RWPE1 (cell line): ENCODE measurements at regions of chr2 and their contacts with region 1.

Region 1: GRCh38 chr2:174465327-174465726 is 21.5 kb downstream of the GPR155 start:
- DNase-seq: no peak
- H3K27ac ChIP-seq: no peak overlapping the region
- CTCF ChIP-seq: no peak

Region 2: DNA sequence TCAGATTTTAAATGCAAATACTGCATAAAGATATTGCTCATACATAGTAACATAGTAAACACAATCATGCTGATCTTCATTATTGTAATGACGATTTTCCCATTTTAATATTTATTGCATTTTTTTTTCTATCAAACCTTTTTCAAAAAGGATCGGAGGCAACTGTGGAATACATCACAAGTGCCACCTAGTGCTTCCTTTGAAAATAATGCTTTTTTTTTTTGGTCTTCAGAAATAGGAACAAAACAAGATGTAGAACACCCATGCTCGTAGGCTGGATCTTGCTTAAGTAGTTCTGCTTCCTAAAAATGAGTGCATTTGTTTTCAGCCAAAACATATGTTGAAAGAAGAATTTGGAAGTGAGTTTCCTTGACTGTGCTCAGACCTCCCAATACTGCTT is 57.2 kb after region 1 on chr2:
- CTCF ChIA-PET with region 1: interaction called, 15 read pairs
- POLR2A ChIA-PET with region 1: no interaction called
- DNase-seq: no peak
- H3K27ac ChIP-seq: no peak overlapping the region
- CTCF ChIP-seq: peak; percentile 37

Region 3: DNA sequence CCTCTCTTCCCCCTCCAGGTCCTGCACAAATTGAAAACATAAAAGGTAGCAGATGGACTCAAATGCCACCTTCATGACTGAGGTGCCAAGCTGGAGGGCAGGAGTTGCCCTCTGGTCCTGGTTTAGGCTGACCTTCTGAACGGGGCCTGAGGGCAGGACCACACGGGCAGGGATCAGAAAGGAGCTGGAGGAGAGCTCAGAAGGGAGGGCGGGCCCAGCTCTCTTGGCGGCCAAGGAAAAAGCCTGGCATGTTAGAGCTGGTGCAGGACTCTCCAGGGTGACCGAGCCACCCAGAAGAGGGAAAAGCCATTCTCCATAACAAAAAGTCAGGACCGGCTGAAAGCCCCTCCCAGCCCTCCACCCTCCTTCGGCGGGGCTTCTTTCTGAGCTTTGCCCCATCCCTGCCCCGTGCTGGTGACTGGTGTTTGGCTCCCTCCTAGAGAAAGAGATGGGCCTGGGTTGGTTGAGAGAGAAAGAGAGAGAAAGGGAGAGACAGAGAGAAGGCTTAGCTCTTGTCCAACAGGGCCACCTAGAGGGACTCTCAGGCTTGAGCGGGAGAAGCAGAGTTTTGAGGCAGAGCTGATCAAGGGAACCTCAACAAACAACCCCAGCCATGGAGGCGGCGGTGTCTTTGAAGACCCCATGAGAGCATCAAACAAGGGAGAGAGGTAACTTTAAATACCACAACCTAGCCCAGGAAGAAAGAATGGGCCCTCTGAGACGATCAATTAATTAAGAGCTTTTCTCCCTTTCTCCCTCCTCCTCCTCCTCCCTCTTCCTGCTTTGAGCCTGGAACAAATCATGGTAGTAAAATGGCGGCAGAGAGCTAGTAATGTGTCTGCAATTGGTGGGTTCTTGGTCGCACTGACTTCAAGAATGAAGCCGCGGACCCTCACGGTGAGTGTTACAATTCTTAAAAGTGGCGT is 81.5 kb after region 1 on chr2:
- CTCF ChIA-PET with region 1: interaction called, 17 read pairs
- POLR2A ChIA-PET with region 1: no interaction called
- DNase-seq: no peak
- H3K27ac ChIP-seq: no peak overlapping the region
- CTCF ChIP-seq: no peak

Region 4: DNA sequence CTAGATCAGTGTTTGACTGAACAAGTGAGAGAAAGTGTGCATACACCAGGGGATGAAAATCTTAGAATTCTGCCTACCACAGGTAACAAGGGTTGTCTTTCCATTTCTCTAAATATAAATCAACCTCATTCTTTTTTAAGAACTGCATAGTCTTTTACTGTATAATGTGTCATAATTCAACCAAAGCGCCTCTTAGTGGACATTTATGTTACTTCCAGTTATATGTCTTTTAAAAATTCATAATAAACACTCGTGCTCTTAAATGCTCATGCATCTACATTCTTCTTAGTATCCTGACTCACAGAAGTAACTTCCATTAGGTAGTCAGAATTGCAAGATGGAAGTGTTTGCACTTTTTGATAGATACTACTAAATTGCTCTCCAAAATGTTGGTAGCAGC is 222.8 kb after region 1 on chr2:
- CTCF ChIA-PET with region 1: interaction called, 27 read pairs
- POLR2A ChIA-PET with region 1: no interaction called
- DNase-seq: no peak
- H3K27ac ChIP-seq: no peak overlapping the region
- CTCF ChIP-seq: peak; percentile 24